ENCODE measurements at regions of chr1 and their contacts with region 1.

Region 1: DNA sequence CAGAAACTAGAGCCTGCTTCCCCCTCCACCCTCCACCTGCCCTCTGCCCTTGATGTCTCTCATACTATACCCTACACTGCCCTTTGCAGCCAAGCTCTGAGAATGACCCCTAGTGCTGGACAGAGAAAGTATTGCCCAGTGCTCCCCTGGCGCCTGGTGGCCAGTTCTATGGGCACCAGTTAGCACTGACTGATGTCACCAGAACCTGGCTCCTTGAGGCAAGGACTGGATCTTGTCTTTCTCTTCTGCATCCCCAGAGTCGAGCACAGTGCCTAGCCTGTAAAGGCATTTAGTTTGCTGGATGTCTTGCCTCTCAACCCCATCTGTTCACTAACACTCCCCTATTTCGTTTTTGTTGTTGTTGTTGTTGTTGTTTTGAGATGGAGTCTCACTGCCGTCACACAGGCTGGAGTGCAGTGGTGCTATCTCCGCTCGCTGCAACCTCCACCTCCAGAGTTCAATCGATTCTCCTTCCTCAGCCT is 5.9 kb downstream of the PHLDA3 start:
- DNase-seq: peak; percentile 74
- H3K4me3 Mint-ChIP-seq: peak overlapping the region; percentile 97
- H3K27ac Mint-ChIP-seq: peak overlapping the region; percentile 93
- H3K4me1 Mint-ChIP-seq: peaks cover 65% of the 10 kb centered on the region
- H3K27me3 Mint-ChIP-seq: no peaks in the 10 kb centered on the region
- CTCF ChIP-seq: peak; percentile 37

Region 2: GRCh38 chr1:201206176-201206575 is 256.9 kb before region 1 on chr1:
- CTCF ChIA-PET with region 1: no interaction called
- POLR2A ChIA-PET with region 1: no interaction called
- intact Hi-C with region 1: no loop called
- DNase-seq: no peak
- H3K4me3 Mint-ChIP-seq: no peak overlapping the region
- H3K27ac Mint-ChIP-seq: no peak overlapping the region
- H3K4me1 Mint-ChIP-seq: no peaks in the 10 kb centered on the region
- H3K27me3 Mint-ChIP-seq: peaks cover 61% of the 10 kb centered on the region
- CTCF ChIP-seq: no peak

Region 3: GRCh38 chr1:201488817-201489589 is 25.9 kb after region 1 on chr1:
- CTCF ChIA-PET with region 1: interaction called, 3,816 read pairs
- POLR2A ChIA-PET with region 1: interaction called, 1,388 read pairs
- intact Hi-C with region 1: loop called (anchors 2 kb)
- DNase-seq: peak; percentile 100
- H3K4me3 Mint-ChIP-seq: peak overlapping the region; percentile 40
- H3K27ac Mint-ChIP-seq: peak overlapping the region; percentile 95
- H3K4me1 Mint-ChIP-seq: peaks cover 54% of the 10 kb centered on the region
- H3K27me3 Mint-ChIP-seq: no peaks in the 10 kb centered on the region
- CTCF ChIP-seq: no peak

Measured in MCF 10A (cell line).